ENCODE measurements at regions of chr3 and their contacts with region 1.

Region 1: DNA sequence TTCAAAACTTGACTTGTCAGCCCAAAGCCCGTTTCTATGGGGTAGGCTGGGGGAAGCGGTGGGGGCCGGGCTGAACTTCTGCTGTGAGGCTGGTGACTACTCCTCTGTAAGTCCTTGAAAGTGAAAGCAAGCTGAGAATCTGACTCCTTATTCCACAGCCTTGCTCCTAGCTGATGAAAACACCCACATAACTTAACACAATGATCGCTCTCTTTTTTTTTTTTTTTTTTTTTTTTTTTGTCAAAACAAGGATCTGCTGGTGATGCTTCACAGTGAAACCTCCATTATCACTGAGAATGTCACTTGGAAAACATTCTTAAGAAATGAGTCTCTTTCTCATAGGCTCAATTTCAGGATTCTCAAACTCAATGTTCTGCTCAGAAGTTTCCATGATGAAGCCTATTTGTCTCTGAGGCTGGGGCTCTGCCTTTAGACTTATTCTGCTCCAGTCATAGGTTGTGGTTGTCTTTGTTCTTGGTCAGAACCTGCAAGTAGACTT is 31.4 kb upstream of the TKT start:
- DNase-seq: no peak
- H3K4me3 ChIP-seq: no peak overlapping the region
- CTCF ChIP-seq: no peak

Region 2: DNA sequence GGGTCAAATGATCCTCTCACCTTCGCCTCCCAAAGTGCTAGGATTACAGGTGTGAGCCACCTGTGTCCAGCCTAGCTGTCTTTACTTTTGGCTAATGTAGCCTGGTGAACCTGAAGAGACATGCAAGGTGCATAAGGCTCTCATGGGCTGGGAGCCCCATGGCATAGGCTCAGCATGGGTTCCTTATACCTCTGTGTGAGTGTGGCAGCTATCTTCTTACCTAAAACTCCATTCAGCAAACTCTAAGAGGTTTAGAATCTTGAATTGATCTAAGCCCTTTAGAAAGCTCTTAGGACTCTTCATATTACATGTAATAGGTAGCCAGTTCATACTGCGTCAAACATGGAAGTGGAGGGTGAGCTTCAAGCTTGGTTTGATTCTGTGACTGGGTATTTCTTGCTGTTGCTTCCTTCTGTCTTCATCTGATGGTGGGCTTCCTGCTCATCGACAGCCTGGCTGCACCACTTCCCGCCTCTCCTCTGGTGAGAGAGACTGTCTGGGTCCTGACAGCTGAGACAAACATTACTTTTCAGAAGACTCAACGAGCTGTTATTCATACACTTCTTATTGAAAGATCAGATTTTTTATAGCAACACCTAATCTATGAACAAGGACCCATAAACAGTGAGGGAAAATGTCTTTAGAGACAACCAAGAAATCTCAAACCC is 12.1 kb before region 1 on chr3:
- CTCF ChIA-PET with region 1: interaction called, 17 read pairs
- POLR2A ChIA-PET with region 1: no interaction called
- DNase-seq: no peak
- H3K4me3 ChIP-seq: no peak overlapping the region
- CTCF ChIP-seq: no peak

Region 3: DNA sequence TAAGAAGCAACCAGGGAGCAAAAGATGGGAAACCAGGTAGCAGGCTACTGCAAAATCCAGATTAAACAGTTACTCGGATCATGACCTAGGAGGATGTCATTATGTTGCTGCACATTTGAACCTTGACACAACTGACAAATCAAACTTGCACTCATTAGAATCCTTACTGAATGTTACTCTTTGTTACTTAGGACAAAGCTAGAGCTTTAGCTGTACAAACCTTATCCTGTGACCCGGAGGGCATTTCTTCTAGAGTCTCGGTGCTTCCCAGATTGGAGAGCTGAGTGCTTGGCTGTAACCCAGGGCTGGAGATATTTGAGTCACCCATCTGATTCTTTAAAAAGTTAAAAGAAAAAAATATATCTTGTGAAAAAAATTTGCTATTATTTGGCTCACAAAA is 16.8 kb after region 1 on chr3:
- CTCF ChIA-PET with region 1: interaction called, 22 read pairs
- POLR2A ChIA-PET with region 1: no interaction called
- DNase-seq: no peak
- H3K4me3 ChIP-seq: no peak overlapping the region
- CTCF ChIP-seq: no peak

Region 4: DNA sequence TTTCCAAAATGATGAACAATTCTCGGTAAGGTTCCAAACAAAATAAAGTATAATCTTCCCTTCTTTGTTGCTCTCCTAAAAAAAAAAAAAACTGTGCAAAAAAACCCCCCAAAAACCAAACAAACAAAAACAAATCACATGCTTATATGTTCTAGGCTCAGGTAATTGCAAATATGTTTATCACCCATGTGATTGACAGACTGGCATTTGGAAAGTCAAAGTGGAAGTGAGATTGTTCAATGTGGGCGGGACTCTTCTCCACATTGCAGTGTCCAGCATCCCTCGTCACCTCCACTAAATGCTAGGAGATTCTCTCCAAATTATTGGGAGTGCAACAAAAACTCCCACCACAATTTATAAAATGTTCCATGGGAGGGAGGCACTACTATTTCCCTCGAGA is 149.6 kb after region 1 on chr3:
- CTCF ChIA-PET with region 1: no interaction called
- POLR2A ChIA-PET with region 1: no interaction called
- DNase-seq: no peak
- H3K4me3 ChIP-seq: no peak overlapping the region
- CTCF ChIP-seq: no peak

Measured in AG04449 (cell line).